ENCODE measurements at regions of chr1 and their contacts with region 1.

Region 1: GRCh38 chr1:248243204-248243603 is 12.0 kb downstream of the OR2M4 start:
- DNase-seq: peak in 5 of 10 donors; percentile 40 to 60 (median 56)
- H3K4me3 ChIP-seq: peak overlapping the region in 18 of 59 donors; percentile 2 to 57 (median 28)
- H3K27ac ChIP-seq: no peak overlapping the region
- H3K27me3 ChIP-seq: no peaks in the 10 kb centered on the region
- CTCF ChIP-seq: peak; percentile 17 to 92 (median 69)

Region 2: GRCh38 chr1:247936415-247936814 is 306.8 kb before region 1 on chr1:
- intact Hi-C with region 1: loop called in 1 of 2 experiments (anchors 10 kb)
- DNase-seq: peak in 1 of 10 donors; percentile 9
- H3K4me3 ChIP-seq: peak overlapping the region in 1 of 59 donors; percentile 68
- H3K27ac ChIP-seq: no peak overlapping the region
- H3K27me3 ChIP-seq: peaks cover 0 to 3% (median 0%) of the 10 kb centered on the region in 45 donors
- CTCF ChIP-seq: no peak

Region 3: DNA sequence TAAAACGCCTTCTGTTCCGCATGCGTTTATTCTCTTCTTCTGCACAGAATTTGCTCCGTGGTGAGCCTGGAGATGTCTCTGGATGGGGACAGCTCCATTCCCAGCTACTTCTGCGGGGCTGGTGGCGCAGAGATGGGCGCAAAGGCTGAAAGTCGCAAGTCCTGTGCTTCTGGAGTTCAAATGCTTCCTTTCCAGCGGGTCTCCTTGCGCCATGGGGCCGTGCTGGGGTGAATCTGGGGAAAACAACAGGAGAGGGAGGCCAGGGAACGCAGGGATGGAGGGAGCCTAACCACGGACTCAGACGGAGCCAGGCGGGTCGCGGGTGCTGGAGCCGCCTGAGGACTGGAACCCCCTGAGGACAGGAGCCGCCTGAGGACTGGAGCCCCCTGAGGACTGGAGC is 62.9 kb after region 1 on chr1:
- intact Hi-C with region 1: no loop called
- DNase-seq: no peak
- H3K4me3 ChIP-seq: no peak overlapping the region
- H3K27ac ChIP-seq: no peak overlapping the region
- H3K27me3 ChIP-seq: no peaks in the 10 kb centered on the region
- CTCF ChIP-seq: no peak

Region 4: GRCh38 chr1:248393050-248393449 is 149.8 kb after region 1 on chr1:
- intact Hi-C with region 1: loop called in 1 of 2 experiments (anchors 5 kb)
- DNase-seq: no peak
- H3K4me3 ChIP-seq: no peak overlapping the region
- H3K27ac ChIP-seq: no peak overlapping the region
- H3K27me3 ChIP-seq: peaks cover 0 to 7% (median 0%) of the 10 kb centered on the region in 45 donors
- CTCF ChIP-seq: peak in 7 of 56 donors; percentile 22 to 59 (median 35)

Measured in dorsolateral prefrontal cortex (tissue), 120 donors.